ENCODE measurements at regions of chr5 and their contacts with region 1.

Region 1: DNA sequence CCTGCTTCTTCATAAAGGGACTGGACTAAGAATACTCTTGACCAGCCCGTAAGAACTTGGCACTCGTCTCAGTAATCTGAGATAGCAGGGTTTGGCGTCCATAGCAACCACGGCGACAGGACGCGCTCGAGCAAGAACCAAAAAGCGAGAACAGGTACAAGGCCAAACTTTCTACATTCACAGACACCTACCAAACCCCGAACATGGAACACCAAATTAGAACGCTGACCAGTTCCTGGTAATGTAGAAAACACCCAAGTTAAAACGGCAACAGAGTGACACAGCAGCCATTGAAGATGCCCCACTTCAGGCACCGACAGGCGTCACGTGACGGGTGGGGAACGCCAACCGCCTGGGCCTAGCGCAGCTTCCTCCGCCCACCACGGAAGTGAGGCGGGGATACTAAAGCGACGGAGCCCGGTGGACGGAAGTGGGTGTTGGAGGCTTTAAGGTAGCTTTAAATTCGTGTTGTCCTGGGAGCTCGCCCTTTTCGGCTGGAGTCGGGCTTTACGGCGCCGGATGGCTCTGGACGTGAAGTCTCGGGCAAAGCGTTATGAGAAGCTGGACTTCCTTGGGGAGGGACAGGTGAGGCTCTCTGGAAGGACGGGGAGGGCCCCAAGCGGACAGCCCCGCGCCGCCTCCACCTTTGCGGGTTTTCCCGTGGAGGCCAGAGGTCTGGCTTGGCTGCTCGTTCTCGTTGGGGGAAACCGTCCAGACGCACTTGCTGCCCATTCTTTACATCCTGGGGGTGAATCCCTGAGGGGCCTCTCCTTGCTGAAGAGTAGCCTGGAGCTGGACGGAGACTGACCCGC is at the start of gene CDK7:
- DNase-seq: peak; percentile 87 to 93 (median 90)
- H3K4me3 ChIP-seq: peak within 1 kb of the TSS; percentile 63 to 96 (median 87)
- H3K4me3 Mint-ChIP-seq: peak within 1 kb of the TSS; percentile 90 to 99
- H3K27ac ChIP-seq: peak within 1 kb of the TSS; percentile 58 to 84
- H3K27ac Mint-ChIP-seq: peak within 1 kb of the TSS; percentile 82 to 97 (median 91)
- H3K4me1 ChIP-seq: peaks cover 11 to 13% of the 10 kb centered on the region in 2 donors
- H3K4me1 Mint-ChIP-seq: peaks cover 24% of the 10 kb centered on the region
- H3K27me3 ChIP-seq: no peaks in the 10 kb centered on the region
- H3K27me3 Mint-ChIP-seq: no peaks in the 10 kb centered on the region
- CTCF ChIP-seq: no peak
- polyA plus RNA-seq, gene CDK7: 12.4 to 20.4 (median 14.4) TPM

Region 2: DNA sequence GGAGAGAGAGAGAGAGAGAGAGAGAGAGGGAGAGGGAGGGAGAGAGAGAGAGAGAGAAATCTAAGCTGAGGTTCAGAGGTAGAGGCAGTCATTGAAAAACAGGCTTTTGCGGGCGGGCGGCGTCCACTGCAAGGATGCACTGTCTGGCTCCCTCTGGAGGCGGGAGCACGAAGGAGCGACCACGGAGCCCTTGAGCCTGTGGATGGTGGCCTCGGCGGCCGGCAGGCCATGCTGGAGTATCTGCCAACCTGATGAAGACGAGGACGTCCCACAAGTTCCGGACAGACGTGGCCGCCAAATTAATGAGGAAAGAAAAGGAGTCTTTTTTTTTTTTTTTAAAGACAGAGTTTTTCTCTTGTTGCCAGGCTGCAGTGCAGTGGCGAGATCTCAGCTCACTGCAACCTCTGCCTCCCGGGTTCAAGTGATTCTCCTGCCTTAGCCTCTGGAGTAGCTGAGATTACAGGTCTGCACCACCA is 100.2 kb after region 1 on chr5:
- intact Hi-C with region 1: loop called in 1 of 2 experiments (anchors 10 kb)
- DNase-seq: peak; percentile 61 to 71 (median 69)
- H3K4me3 ChIP-seq: no peak overlapping the region
- H3K4me3 Mint-ChIP-seq: peak overlapping the region; percentile 2 to 26
- H3K27ac ChIP-seq: no peak overlapping the region
- H3K27ac Mint-ChIP-seq: no peak overlapping the region
- H3K4me1 ChIP-seq: peaks cover 20 to 27% of the 10 kb centered on the region in 2 donors
- H3K4me1 Mint-ChIP-seq: peaks cover 27% of the 10 kb centered on the region
- H3K27me3 ChIP-seq: no peaks in the 10 kb centered on the region
- H3K27me3 Mint-ChIP-seq: peaks cover 0 to 2% (median 1%) of the 10 kb centered on the region in 3 donors
- CTCF ChIP-seq: peak; percentile 75

Region 3: DNA sequence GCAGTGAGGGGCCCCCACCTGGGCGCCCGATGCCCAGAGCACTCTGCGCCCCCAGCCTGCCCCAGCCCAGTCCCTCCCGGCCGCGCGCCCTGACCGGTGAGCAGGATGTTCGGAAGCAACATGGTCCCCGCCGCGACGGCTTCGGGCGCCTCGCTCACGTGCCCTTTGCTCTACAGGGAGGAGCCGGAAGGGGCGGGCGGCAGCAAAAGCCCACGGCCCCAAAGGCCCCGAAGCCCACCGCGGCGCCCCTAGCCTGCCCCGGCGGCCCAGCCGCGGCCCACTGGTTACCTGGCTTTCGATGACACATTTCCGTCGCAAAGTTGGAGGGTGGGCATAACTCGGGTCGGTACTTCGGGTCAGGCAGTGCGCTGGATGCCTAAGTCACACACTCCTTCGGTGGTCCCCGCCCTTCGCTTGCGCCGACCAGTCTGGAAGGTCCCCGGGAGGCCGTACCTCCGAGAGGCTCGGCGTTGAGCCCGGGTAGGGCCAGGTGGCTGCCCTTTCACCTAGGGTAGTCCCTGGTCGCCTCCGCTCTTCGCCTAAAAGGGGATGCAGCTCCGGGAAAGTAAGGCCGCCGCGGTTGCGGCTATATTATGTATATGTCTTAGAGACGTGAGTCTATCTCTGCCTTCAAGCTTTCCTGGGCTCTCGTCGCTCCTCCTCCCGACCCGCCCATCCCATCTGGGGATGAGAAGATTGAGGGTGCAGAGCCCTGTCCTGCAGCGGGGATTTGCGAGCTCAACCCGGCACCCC is 134.9 kb after region 1 on chr5 and contains the starts of genes AK6, RAD17 and TAF9:
- intact Hi-C with region 1: loop called in 1 of 2 experiments (anchors 10 kb)
- DNase-seq: peak; percentile 83 to 89 (median 85)
- H3K4me3 ChIP-seq: peak within 1 kb of the TSS; percentile 77 to 97 (median 86)
- H3K4me3 Mint-ChIP-seq: peak within 1 kb of the TSS; percentile 96 to 97
- H3K27ac ChIP-seq: peak within 1 kb of the TSS; percentile 56 to 99
- H3K27ac Mint-ChIP-seq: peak within 1 kb of the TSS; percentile 93 to 99 (median 98)
- H3K4me1 ChIP-seq: peaks cover 18 to 26% of the 10 kb centered on the region in 2 donors
- H3K4me1 Mint-ChIP-seq: peaks cover 23% of the 10 kb centered on the region
- H3K27me3 ChIP-seq: no peaks in the 10 kb centered on the region
- H3K27me3 Mint-ChIP-seq: no peaks in the 10 kb centered on the region
- CTCF ChIP-seq: no peak
- polyA plus RNA-seq, gene AK6: 7.6 to 50.3 (median 30.6) TPM
- polyA plus RNA-seq, gene RAD17: 9.1 to 11.6 (median 9.6) TPM
- polyA plus RNA-seq, gene TAF9: 50.2 to 156 (median 143) TPM